Right cardiac atrium (tissue), 5 donors: ENCODE measurements at regions of chr17 and their contacts with region 1.

Region 1: GRCh38 chr17:5438716-5439445 is at the start of gene C1QBP:
- DNase-seq: peak; percentile 91 to 97 (median 97)
- ATAC-seq: peak; percentile 97
- H3K4me3 ChIP-seq: peak within 1 kb of the TSS; percentile 87
- H3K27ac ChIP-seq: peak within 1 kb of the TSS; percentile 63
- H3K4me1 ChIP-seq: no peaks in the 10 kb centered on the region
- H3K27me3 ChIP-seq: no peaks in the 10 kb centered on the region
- total RNA-seq, gene C1QBP: 86.7 to 101 (median 93.8) TPM

Region 2: DNA sequence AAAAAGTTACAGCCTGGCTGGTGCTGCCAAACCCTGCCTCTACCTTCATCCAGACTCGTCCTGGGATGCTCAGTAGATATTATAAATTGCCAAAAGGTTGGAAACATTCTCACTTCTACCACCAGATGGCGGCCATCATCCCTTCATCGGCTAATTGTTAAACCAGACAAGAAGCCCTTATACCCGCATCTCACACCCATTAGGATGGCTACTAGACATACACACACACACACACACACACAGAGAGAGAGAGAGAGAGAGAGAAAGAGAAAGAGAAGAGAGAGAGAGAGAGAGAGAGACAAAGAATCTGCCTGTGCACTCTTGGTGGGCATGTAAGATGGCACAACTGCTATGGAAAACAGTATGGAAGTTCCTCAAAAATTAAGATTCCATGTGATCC is 189.3 kb before region 1 on chr17:
- intact Hi-C with region 1: loop called in 1 of 4 experiments (anchors 10 kb)
- DNase-seq: peak in 1 of 3 donors; percentile 35
- ATAC-seq: peak; percentile 82 to 86
- H3K4me3 ChIP-seq: no peak overlapping the region
- H3K27ac ChIP-seq: no peak overlapping the region
- H3K4me1 ChIP-seq: no peaks in the 10 kb centered on the region
- H3K27me3 ChIP-seq: no peaks in the 10 kb centered on the region

Region 3: DNA sequence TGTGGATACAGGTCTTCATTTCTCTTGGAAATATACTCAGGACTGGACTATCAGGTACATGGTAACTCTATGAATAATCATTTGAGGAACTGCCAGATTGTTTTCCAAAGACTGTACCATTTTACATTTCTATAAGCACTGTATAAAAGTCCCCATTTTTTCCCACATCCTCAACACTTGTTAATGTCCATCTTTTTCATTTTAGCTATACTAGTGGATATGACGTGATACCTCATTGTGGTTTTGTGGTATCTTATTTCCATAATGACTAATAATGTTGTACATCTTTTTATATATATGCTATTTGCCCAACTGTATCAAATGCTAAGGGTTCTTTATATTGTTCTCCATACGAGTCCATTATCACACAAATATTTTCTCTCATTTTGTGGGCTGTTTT is 42.3 kb before region 1 on chr17:
- intact Hi-C with region 1: no loop called
- DNase-seq: no peak
- ATAC-seq: no peak
- H3K4me3 ChIP-seq: no peak overlapping the region
- H3K27ac ChIP-seq: no peak overlapping the region
- H3K4me1 ChIP-seq: no peaks in the 10 kb centered on the region
- H3K27me3 ChIP-seq: no peaks in the 10 kb centered on the region